CD8-positive, alpha-beta T cell (primary cell): ENCODE measurements at regions of chr1 and their contacts with region 1.

Region 1: GRCh38 chr1:2194898-2195673 is 514 bp upstream of the FAAP20 start:
- DNase-seq: peak; percentile 81 to 97 (median 88)
- ATAC-seq: peak; percentile 71
- H3K4me3 ChIP-seq: peak overlapping the region; percentile 64 to 66
- H3K4me3 Mint-ChIP-seq: peak overlapping the region; percentile 87
- H3K27ac ChIP-seq: peak overlapping the region; percentile 77 to 93
- H3K27ac Mint-ChIP-seq: peak overlapping the region; percentile 93
- H3K4me1 ChIP-seq: peaks cover 42% of the 10 kb centered on the region
- H3K4me1 Mint-ChIP-seq: peaks cover 34% of the 10 kb centered on the region
- H3K27me3 ChIP-seq: no peaks in the 10 kb centered on the region
- H3K27me3 Mint-ChIP-seq: no peaks in the 10 kb centered on the region
- CTCF ChIP-seq: peak; percentile 79

Region 2: GRCh38 chr1:1919304-1920056 is 275.6 kb before region 1 on chr1:
- CTCF ChIA-PET with region 1: no interaction called
- POLR2A ChIA-PET with region 1: no interaction called
- intact Hi-C with region 1: loop called in 1 of 2 experiments (anchors 2 kb)
- DNase-seq: peak; percentile 97 to 100 (median 99)
- ATAC-seq: peak; percentile 89
- H3K4me3 ChIP-seq: peak overlapping the region; percentile 39 to 74
- H3K4me3 Mint-ChIP-seq: peak overlapping the region; percentile 47
- H3K27ac ChIP-seq: peak overlapping the region in 1 of 2 experiments; percentile 28
- H3K27ac Mint-ChIP-seq: peak overlapping the region; percentile 5
- H3K4me1 ChIP-seq: peaks cover 17% of the 10 kb centered on the region
- H3K4me1 Mint-ChIP-seq: peaks cover 3% of the 10 kb centered on the region
- H3K27me3 ChIP-seq: no peaks in the 10 kb centered on the region
- H3K27me3 Mint-ChIP-seq: no peaks in the 10 kb centered on the region
- CTCF ChIP-seq: no peak

Region 3: GRCh38 chr1:2205191-2205952 is 10.3 kb after region 1 on chr1:
- CTCF ChIA-PET with region 1: interaction called, 9 read pairs
- POLR2A ChIA-PET with region 1: interaction called, 5 read pairs
- intact Hi-C with region 1: loop called in 1 of 2 experiments (anchors 1 kb)
- DNase-seq: peak; percentile 91 to 97 (median 95)
- ATAC-seq: peak; percentile 93
- H3K4me3 ChIP-seq: peak overlapping the region; percentile 39 to 61
- H3K4me3 Mint-ChIP-seq: peak overlapping the region; percentile 69
- H3K27ac ChIP-seq: peak overlapping the region; percentile 19 to 47
- H3K27ac Mint-ChIP-seq: no peak overlapping the region
- H3K4me1 ChIP-seq: peaks cover 14% of the 10 kb centered on the region
- H3K4me1 Mint-ChIP-seq: peaks cover 8% of the 10 kb centered on the region
- H3K27me3 ChIP-seq: no peaks in the 10 kb centered on the region
- H3K27me3 Mint-ChIP-seq: no peaks in the 10 kb centered on the region
- CTCF ChIP-seq: no peak

Region 4: GRCh38 chr1:2255420-2256369 is 60.6 kb after region 1 on chr1:
- CTCF ChIA-PET with region 1: interaction called, 9 read pairs
- POLR2A ChIA-PET with region 1: interaction called, 3 read pairs
- intact Hi-C with region 1: loop called in 1 of 2 experiments (anchors 1 kb)
- DNase-seq: peak; percentile 59 to 97 (median 75)
- ATAC-seq: peak; percentile 66
- H3K4me3 ChIP-seq: no peak overlapping the region
- H3K4me3 Mint-ChIP-seq: no peak overlapping the region
- H3K27ac ChIP-seq: peak overlapping the region; percentile 97 to 100
- H3K27ac Mint-ChIP-seq: no peak overlapping the region
- H3K4me1 ChIP-seq: peaks cover 86% of the 10 kb centered on the region
- H3K4me1 Mint-ChIP-seq: peaks cover 54% of the 10 kb centered on the region
- H3K27me3 ChIP-seq: no peaks in the 10 kb centered on the region
- H3K27me3 Mint-ChIP-seq: no peaks in the 10 kb centered on the region
- CTCF ChIP-seq: no peak

Region 5: DNA sequence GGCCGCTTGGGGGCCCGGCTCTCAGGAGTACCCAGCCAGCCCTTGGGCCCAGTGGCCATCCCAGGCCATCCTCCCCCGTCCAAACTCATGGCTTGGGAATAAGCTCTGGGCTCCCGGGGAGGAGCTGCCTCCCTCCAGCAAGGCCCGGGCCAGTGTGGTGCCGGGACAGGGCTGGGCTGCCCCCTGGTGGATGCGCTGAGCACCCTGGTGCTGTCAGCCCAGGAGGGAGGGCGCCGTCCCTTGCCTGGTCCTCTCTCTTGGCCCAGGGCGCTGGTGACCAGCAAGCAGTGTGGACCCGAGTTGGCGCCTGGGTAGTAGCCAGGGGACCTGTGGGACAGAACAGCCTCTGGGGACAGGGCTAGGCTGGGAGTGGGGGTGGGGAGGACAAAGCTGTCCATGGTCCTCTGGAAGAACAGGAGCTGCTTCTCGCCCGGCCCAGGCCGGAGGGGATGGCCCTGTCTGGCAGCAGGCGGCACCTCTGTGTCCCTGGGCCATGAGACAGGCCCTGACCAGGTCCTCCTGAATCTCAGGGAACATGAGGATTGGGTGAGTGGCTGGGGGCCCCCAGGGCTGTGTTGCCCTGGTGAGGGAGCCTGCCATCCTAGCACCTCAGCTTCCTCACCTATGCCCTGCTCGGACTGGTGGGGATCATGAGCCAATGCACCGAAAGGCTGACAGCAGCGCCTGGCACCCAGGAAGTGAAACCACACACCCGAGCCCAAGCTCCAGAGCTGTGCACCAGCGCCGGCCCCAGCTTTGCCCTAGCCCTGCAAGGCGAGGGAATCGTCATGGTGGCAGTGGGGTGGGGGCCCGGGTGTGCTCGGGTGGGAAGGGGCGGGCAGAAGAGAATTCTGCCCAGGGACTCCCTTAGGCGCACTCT is 186.9 kb after region 1 on chr1:
- CTCF ChIA-PET with region 1: interaction called, 332 read pairs
- POLR2A ChIA-PET with region 1: interaction called, 16 read pairs
- intact Hi-C with region 1: loop called in 1 of 2 experiments (anchors 1 kb)
- DNase-seq: peak; percentile 59 to 87 (median 78)
- ATAC-seq: peak; percentile 97
- H3K4me3 ChIP-seq: no peak overlapping the region
- H3K4me3 Mint-ChIP-seq: no peak overlapping the region
- H3K27ac ChIP-seq: no peak overlapping the region
- H3K27ac Mint-ChIP-seq: no peak overlapping the region
- H3K4me1 ChIP-seq: peaks cover 15% of the 10 kb centered on the region
- H3K4me1 Mint-ChIP-seq: peaks cover 3% of the 10 kb centered on the region
- H3K27me3 ChIP-seq: no peaks in the 10 kb centered on the region
- H3K27me3 Mint-ChIP-seq: no peaks in the 10 kb centered on the region
- CTCF ChIP-seq: peak; percentile 71

Region 6: GRCh38 chr1:2545759-2546514 is 350.9 kb after region 1 on chr1:
- CTCF ChIA-PET with region 1: interaction called, 4 read pairs
- POLR2A ChIA-PET with region 1: interaction called, 7 read pairs
- intact Hi-C with region 1: loop called (anchors 2 kb)
- DNase-seq: peak; percentile 85 to 96 (median 89)
- ATAC-seq: peak; percentile 42
- H3K4me3 ChIP-seq: peak overlapping the region; percentile 87 to 91
- H3K4me3 Mint-ChIP-seq: peak overlapping the region; percentile 91
- H3K27ac ChIP-seq: peak overlapping the region; percentile 79 to 99
- H3K27ac Mint-ChIP-seq: peak overlapping the region; percentile 96
- H3K4me1 ChIP-seq: peaks cover 40% of the 10 kb centered on the region
- H3K4me1 Mint-ChIP-seq: peaks cover 31% of the 10 kb centered on the region
- H3K27me3 ChIP-seq: no peaks in the 10 kb centered on the region
- H3K27me3 Mint-ChIP-seq: no peaks in the 10 kb centered on the region
- CTCF ChIP-seq: no peak